Psoas muscle (tissue), 8 donors: ENCODE measurements at regions of chr2 and their contacts with region 1.

Region 1: GRCh38 chr2:216687646-216688045 is 7.7 kb downstream of the IGFBP5 start:
- DNase-seq: no peak
- ATAC-seq: no peak
- H3K4me3 ChIP-seq: no peak overlapping the region
- H3K27ac ChIP-seq: peak overlapping the region; percentile 89
- H3K4me1 ChIP-seq: peaks cover 83% of the 10 kb centered on the region
- H3K27me3 ChIP-seq: no peaks in the 10 kb centered on the region
- CTCF ChIP-seq: peak; percentile 16

Region 2: DNA sequence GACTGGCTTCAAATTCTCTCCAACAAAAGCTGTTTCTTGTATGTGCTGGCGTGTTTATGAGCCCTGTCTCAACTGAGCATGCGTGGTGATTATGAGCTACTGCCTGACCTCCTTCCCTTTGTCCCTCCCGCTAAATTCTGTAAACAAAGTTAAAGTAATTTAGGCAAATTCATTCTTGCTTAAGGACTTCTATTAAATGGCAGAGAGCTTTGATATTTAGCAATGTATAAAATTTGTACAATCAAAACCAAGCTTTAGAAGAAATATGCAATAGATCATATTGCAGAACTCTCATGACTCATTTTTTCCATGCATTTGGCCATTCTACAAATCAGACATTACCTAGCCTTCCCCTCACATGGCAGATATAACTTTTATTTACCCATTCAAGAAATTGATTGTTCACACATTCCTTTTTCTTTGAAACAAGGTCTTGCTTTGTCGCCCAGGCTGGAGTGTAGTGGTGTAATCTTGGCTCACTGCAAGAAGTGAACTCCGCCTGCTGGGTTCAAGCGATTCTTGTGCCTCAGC is 36.2 kb before region 1 on chr2:
- intact Hi-C with region 1: no loop called
- DNase-seq: no peak
- ATAC-seq: no peak
- H3K4me3 ChIP-seq: no peak overlapping the region
- H3K27ac ChIP-seq: no peak overlapping the region
- H3K4me1 ChIP-seq: no peaks in the 10 kb centered on the region
- H3K27me3 ChIP-seq: no peaks in the 10 kb centered on the region
- CTCF ChIP-seq: no peak

Region 3: GRCh38 chr2:216888907-216889622 is 201.4 kb after region 1 on chr2:
- intact Hi-C with region 1: loop called in 1 of 2 experiments (anchors 5 kb)
- DNase-seq: peak; percentile 68 to 89
- ATAC-seq: peak; percentile 79 to 86 (median 81)
- H3K4me3 ChIP-seq: no peak overlapping the region
- H3K27ac ChIP-seq: peak overlapping the region; percentile 83
- H3K4me1 ChIP-seq: peaks cover 48% of the 10 kb centered on the region
- H3K27me3 ChIP-seq: no peaks in the 10 kb centered on the region
- CTCF ChIP-seq: no peak

Region 4: GRCh38 chr2:217434181-217434975 is 746.7 kb after region 1 on chr2:
- intact Hi-C with region 1: loop called in 1 of 2 experiments (anchors 5 kb)
- DNase-seq: peak; percentile 83 to 92
- ATAC-seq: peak; percentile 98 to 99 (median 98)
- H3K4me3 ChIP-seq: peak overlapping the region; percentile 55
- H3K27ac ChIP-seq: peak overlapping the region; percentile 78
- H3K4me1 ChIP-seq: peaks cover 44% of the 10 kb centered on the region
- H3K27me3 ChIP-seq: no peaks in the 10 kb centered on the region
- CTCF ChIP-seq: no peak

Region 5: DNA sequence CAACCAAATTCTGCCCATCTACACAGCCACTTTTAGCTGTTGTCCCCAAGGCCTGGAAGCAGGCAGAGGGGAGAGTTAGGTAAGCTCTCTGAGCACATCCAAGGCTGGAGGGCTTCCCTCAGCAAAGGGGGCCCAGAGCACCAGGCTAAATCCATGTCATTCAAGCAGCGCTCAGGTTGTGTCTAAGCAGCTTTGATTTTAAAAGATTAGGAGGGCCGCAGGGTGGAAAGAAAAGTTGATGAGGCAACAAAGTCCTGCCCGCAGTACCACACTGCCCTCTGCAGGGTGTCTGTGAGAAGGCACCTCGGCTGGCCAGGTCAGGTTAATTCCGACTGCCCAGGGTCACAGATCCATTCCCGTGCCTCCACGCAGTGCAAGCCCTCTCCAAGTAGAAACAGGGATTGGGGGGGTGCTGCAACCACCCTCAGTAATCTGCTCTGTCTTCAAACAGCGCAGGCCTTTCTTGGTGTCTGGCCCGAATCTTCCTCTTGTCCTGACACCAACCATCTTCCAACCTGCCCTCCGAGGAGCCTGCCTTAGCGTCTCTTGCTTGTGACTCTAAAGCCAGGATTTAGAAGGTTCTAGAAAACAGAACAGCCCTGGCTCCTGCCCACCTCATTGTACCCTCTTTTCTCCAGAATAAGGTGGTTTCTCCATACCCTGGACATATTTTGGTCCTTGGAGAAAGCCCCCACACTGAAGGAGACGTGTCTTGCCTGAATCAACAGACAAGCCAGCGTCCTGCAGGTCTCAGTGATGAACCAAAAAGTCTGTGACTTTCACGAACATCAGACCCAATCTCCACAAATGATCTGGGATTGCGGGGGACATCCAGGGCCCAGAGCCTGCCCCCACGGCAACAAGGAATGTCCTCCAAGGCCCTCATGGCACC is 1026.0 kb after region 1 on chr2:
- intact Hi-C with region 1: loop called (anchors 5 to 10 kb)
- DNase-seq: peak; percentile 74 to 88
- ATAC-seq: peak; percentile 89 to 96 (median 91)
- H3K4me3 ChIP-seq: no peak overlapping the region
- H3K27ac ChIP-seq: peak overlapping the region; percentile 2
- H3K4me1 ChIP-seq: peaks cover 17% of the 10 kb centered on the region
- H3K27me3 ChIP-seq: no peaks in the 10 kb centered on the region
- CTCF ChIP-seq: peak; percentile 98